Activated CD8-positive, alpha-beta T cell treated with anti-CD3 and anti-CD28 coated beads for 36 hours (primary cell): ENCODE measurements at regions of chr3 and their contacts with region 1.

Region 1: DNA sequence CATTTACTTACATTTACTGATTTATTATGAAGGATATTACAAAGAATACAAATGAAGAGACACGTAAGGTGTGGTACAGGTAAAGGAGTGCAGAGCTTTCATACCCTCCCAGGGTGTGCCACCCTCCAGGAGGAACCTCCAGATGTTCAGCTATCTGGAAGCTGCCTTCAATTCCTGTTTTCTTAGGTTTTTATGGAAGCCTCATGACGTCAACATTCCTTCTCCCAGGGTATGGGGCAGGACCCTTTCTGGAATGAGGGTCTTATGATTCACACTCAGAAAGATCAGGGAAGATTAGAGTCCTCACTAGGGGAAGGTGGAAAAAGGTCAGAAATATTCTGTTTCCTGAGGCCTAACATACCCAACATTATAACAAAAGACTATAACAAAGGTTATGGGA is 99.8 kb upstream of the PLCL2 start:
- DNase-seq: no peak
- ATAC-seq: no peak
- H3K4me3 Mint-ChIP-seq: no peak overlapping the region
- H3K27ac Mint-ChIP-seq: no peak overlapping the region
- H3K4me1 Mint-ChIP-seq: peaks cover 8% of the 10 kb centered on the region
- H3K27me3 Mint-ChIP-seq: no peaks in the 10 kb centered on the region
- CTCF ChIP-seq: no peak

Region 2: GRCh38 chr3:16550676-16551341 is 234.1 kb before region 1 on chr3:
- CTCF ChIA-PET with region 1: no interaction called
- POLR2A ChIA-PET with region 1: no interaction called
- intact Hi-C with region 1: no loop called
- DNase-seq: peak; percentile 87
- ATAC-seq: peak; percentile 100
- H3K4me3 Mint-ChIP-seq: no peak overlapping the region
- H3K27ac Mint-ChIP-seq: peak overlapping the region; percentile 95
- H3K4me1 Mint-ChIP-seq: peaks cover 23% of the 10 kb centered on the region
- H3K27me3 Mint-ChIP-seq: peaks cover 5% of the 10 kb centered on the region
- CTCF ChIP-seq: peak; percentile 94

Region 3: DNA sequence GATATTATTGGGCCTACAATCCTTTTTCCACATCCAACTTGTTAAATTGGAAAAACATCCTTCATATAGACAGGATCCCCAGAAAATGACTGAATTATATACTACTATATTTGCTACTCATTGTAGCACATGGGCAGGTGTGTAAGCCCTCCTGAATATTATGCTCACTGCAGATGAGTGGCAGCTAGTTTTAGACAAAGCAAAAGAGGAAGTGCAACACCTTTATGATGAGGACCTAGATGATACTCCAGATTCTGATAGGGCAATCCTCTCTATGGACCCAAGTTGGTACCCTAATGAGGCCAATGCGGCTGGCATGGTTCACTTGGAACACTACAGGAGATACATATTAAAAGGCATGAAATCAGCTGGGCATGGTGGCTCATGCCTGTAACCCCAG is 19.3 kb before region 1 on chr3:
- CTCF ChIA-PET with region 1: no interaction called
- POLR2A ChIA-PET with region 1: no interaction called
- intact Hi-C with region 1: loop called (anchors 1 kb)
- DNase-seq: no peak
- ATAC-seq: no peak
- H3K4me3 Mint-ChIP-seq: no peak overlapping the region
- H3K27ac Mint-ChIP-seq: no peak overlapping the region
- H3K4me1 Mint-ChIP-seq: no peaks in the 10 kb centered on the region
- H3K27me3 Mint-ChIP-seq: no peaks in the 10 kb centered on the region
- CTCF ChIP-seq: no peak

Region 4: DNA sequence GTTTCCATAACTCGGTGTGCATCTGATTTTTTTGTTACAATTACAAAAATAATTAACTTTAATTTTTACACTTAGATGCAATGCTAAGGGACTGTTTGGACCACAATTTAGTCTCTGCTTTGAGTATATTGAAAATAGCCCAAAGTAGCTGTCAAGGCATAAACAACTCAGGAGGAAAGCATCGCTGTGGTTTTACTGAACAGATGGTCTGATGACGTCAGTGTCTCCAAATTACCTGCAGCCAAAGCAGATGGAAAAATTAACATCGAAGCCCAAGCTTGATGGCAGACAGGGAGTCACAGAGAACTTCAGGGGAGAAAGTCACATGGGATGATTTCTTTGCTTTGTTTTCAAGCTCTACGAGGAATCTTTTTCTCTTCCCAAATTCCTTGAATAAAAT is 16.8 kb after region 1 on chr3:
- CTCF ChIA-PET with region 1: no interaction called
- POLR2A ChIA-PET with region 1: no interaction called
- intact Hi-C with region 1: no loop called
- DNase-seq: peak; percentile 13
- ATAC-seq: no peak
- H3K4me3 Mint-ChIP-seq: no peak overlapping the region
- H3K27ac Mint-ChIP-seq: no peak overlapping the region
- H3K4me1 Mint-ChIP-seq: peaks cover 26% of the 10 kb centered on the region
- H3K27me3 Mint-ChIP-seq: no peaks in the 10 kb centered on the region
- CTCF ChIP-seq: no peak

Region 5: DNA sequence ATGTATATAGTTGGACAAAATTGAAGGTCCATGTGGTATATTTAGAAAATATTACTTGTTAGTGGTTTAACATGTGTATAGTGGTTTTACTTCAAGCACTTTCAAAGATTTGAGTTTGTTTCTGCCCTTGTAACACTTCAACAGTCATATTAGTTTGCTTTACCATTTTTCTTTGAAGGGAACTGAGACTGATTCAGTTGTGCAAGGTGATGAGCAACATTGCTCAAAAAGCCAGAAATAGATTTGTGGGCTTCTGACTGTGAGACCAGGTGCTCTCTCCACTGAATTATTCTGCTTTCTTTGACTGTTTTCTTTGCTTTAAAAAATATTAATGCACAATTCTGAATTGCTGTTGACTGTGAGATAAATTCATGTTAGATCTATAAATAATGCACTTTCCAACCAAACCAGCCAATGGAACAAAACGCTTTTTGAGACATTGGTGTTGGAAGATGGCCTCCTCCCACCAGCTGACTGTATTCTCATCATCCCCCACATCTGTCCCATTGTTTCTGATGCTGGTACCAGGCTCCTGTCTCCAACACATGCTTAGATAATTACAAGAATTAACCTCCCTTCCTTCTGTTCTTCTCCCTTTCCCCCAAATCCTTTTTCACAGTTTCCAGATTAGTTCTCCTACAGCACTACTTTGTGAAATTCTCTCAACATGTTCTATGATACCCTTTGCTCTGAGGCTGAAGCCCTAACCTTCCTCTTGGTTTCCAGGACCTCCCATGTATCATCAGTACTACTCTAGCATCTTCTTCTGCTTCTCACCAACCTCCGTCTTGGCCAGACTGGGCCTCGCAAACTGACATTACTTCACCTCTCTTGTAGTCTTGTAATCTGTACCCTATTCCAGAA is 127.7 kb after region 1 on chr3:
- CTCF ChIA-PET with region 1: no interaction called
- POLR2A ChIA-PET with region 1: no interaction called
- intact Hi-C with region 1: no loop called
- DNase-seq: no peak
- ATAC-seq: peak; percentile 57
- H3K4me3 Mint-ChIP-seq: no peak overlapping the region
- H3K27ac Mint-ChIP-seq: peak overlapping the region; percentile 76
- H3K4me1 Mint-ChIP-seq: peaks cover 73% of the 10 kb centered on the region
- H3K27me3 Mint-ChIP-seq: no peaks in the 10 kb centered on the region
- CTCF ChIP-seq: no peak